ENCODE measurements at regions of chr17 and their contacts with region 1.

Region 1: DNA sequence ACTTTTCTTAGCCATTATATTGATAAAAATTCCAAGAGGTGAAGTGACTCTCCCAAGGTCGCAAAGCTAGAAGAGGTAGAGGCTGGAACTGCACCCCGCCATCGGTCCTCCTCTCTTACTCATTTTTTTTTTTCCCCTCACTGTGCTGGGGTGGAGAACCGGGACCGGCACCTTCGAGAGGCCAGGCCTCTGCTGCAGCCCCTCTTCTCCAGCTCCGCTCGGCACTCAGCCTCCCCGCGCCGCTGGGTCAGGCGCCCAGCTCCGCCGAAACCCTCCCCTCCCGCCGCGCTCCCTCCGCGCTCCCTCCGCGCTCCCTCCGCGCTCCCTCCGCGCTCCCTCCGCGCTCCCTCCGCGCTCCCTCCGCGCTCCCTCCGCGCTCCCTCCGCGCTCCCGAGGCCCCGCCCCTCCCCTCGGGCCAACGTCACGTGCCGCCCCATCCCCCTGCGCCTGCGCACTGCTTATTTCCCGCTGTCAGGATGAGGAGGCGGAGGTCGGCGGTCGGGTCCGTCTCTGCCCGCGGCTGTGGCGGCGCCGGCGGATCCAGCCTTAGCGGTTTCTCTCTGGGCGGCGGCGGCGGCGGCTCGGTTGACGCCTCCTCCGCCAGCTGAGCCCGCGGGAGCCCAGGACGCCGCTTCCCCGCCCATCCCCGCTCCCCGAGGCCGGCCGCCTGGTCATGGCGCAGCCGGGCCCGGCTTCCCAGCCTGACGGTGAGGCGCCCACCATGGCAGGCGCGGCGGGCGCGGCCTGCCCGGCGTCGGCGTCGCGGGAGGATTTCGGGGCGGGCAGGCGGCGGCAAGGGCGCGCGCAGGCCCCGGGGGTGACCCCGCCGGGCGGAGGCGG is at the start of gene RABEP1:
- DNase-seq: peak; percentile 89 to 97 (median 94)
- ATAC-seq: peak; percentile 80
- H3K4me3 ChIP-seq: peak within 1 kb of the TSS; percentile 76
- H3K4me3 Mint-ChIP-seq: peak within 1 kb of the TSS; percentile 97
- H3K27ac ChIP-seq: peak within 1 kb of the TSS in 1 of 2 donors; percentile 64
- H3K27ac Mint-ChIP-seq: peak within 1 kb of the TSS; percentile 91
- H3K4me1 ChIP-seq: peaks cover 26% of the 10 kb centered on the region
- H3K4me1 Mint-ChIP-seq: peaks cover 40% of the 10 kb centered on the region
- H3K27me3 ChIP-seq: no peaks in the 10 kb centered on the region
- H3K27me3 Mint-ChIP-seq: no peaks in the 10 kb centered on the region
- CTCF ChIP-seq: peak; percentile 43
- total RNA-seq, gene RABEP1: 27.4 to 31.8 TPM

Region 2: DNA sequence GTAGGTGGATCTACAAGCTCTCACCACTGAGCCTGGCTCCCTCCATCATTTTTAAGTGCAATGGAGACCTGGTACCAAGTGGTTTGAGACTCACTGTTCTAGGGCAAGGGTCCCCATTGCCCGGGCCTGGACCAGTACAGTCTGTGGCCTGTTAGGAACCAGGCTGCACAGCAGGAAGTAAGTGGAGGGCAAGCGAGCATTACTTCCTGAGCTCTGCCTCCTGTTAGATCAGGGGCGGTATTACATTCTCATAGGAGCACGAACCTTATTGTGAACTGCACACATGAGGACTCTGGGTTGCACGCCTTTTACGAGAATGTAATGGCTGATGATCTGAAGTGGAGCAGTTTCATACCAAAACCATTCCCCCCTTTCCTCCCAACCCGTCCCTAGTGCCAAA is 83.6 kb before region 1 on chr17:
- CTCF ChIA-PET with region 1: interaction called, 3 read pairs
- POLR2A ChIA-PET with region 1: interaction called, 3 read pairs
- intact Hi-C with region 1: loop called in 1 of 2 experiments (anchors 5 kb)
- DNase-seq: peak in 1 of 14 experiments; percentile 16
- ATAC-seq: no peak
- H3K4me3 ChIP-seq: no peak overlapping the region
- H3K4me3 Mint-ChIP-seq: no peak overlapping the region
- H3K27ac ChIP-seq: no peak overlapping the region
- H3K27ac Mint-ChIP-seq: no peak overlapping the region
- H3K4me1 ChIP-seq: peaks cover 10% of the 10 kb centered on the region
- H3K4me1 Mint-ChIP-seq: peaks cover 4% of the 10 kb centered on the region
- H3K27me3 ChIP-seq: no peaks in the 10 kb centered on the region
- H3K27me3 Mint-ChIP-seq: no peaks in the 10 kb centered on the region
- CTCF ChIP-seq: no peak

Region 3: GRCh38 chr17:5241861-5242671 is 40.0 kb before region 1 on chr17:
- CTCF ChIA-PET with region 1: no interaction called
- POLR2A ChIA-PET with region 1: interaction called, 4 read pairs
- intact Hi-C with region 1: loop called (anchors 5 kb)
- DNase-seq: peak in 7 of 14 experiments; percentile 7 to 79 (median 42)
- ATAC-seq: peak; percentile 96
- H3K4me3 ChIP-seq: no peak overlapping the region
- H3K4me3 Mint-ChIP-seq: peak overlapping the region; percentile 78
- H3K27ac ChIP-seq: peak overlapping the region; percentile 71
- H3K27ac Mint-ChIP-seq: peak overlapping the region; percentile 95
- H3K4me1 ChIP-seq: peaks cover 41% of the 10 kb centered on the region
- H3K4me1 Mint-ChIP-seq: peaks cover 44% of the 10 kb centered on the region
- H3K27me3 ChIP-seq: no peaks in the 10 kb centered on the region
- H3K27me3 Mint-ChIP-seq: no peaks in the 10 kb centered on the region
- CTCF ChIP-seq: no peak

Region 4: GRCh38 chr17:5438716-5439445 is 156.8 kb after region 1 on chr17 and contains the start of gene C1QBP:
- CTCF ChIA-PET with region 1: no interaction called
- POLR2A ChIA-PET with region 1: no interaction called
- intact Hi-C with region 1: loop called in 1 of 2 experiments (anchors 10 kb)
- DNase-seq: peak; percentile 85 to 97 (median 91)
- ATAC-seq: peak; percentile 93
- H3K4me3 ChIP-seq: peak within 1 kb of the TSS; percentile 70
- H3K4me3 Mint-ChIP-seq: peak within 1 kb of the TSS; percentile 89
- H3K27ac ChIP-seq: peak within 1 kb of the TSS; percentile 71 to 74
- H3K27ac Mint-ChIP-seq: peak within 1 kb of the TSS; percentile 86
- H3K4me1 ChIP-seq: peaks cover 33% of the 10 kb centered on the region
- H3K4me1 Mint-ChIP-seq: peaks cover 35% of the 10 kb centered on the region
- H3K27me3 ChIP-seq: no peaks in the 10 kb centered on the region
- H3K27me3 Mint-ChIP-seq: no peaks in the 10 kb centered on the region
- CTCF ChIP-seq: peak; percentile 96
- total RNA-seq, gene C1QBP: 59.9 to 62.9 TPM

Measured in CD4-positive, alpha-beta T cell (primary cell).